GM10248 (cell line): ENCODE measurements at regions of chr9 and their contacts with region 1.

Region 1: DNA sequence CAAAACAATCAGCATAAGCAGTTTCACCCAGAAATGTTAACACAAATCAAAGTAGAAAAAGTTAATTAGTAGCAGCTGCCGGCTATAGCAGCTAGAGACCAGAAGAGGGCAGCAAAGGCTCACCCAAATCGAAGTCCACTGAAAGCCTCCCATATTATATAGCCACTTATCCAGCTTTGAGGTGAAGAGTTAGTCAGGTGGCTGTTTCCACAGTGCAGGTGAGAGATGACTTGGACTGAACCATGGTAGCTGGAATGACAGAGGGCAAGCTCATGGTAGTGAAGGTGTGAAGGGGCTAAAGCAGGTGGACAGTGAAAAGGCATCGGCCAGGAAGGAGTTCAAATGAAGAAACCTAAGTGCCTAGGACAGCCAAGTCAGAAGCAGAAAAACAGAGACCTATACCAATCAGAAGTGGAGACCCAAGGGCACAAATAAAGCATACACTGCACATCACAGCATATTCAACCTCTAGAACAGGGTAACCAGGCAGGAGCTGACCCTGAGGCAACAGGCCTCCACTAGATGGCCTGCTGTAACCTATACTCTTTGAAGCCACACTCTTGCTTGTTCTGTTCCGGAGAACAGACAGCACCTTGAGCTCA is 7.2 kb upstream of the RNF38 start:
- DNase-seq: peak; percentile 55
- CTCF ChIP-seq: peak; percentile 92

Region 2: DNA sequence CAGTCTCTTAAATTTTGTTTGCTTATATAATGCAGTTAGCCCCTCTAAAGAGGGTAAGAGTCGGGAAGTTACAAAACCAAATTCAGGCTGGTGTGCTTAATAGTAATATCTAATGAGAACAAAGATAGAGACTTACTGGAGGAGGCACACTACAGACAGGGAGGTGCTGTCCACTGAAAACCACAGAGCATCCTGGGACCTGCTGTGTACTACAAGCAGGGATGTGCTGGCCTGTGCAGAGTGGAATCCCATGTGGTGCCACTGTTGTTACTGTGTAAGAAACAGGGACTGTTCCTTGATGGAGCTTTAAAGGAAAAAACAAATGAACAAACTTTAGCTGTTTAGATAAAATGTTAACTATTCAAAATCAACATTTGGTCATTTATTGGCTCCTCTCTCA is 49.6 kb before region 1 on chr9:
- CTCF ChIA-PET with region 1: no interaction called
- POLR2A ChIA-PET with region 1: no interaction called
- DNase-seq: no peak
- CTCF ChIP-seq: no peak

Region 3: DNA sequence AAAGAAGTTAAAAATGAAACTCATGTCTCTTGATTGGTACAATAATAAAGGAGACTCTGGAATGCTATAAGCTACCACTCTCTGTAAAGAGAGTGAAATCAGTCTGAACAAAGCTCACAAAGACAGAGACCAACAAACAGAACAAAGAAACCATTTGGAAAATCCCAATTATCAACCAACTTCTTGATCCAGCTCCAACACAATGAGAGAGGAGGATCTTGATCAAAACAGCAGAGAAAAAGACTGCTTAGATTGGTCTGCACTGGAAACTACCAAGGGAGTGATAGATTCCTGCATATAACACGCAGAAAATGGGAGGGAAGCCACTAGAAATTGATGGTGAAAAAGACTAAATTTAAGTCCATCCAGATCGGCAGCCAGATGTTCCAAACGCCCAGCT is 16.0 kb after region 1 on chr9:
- CTCF ChIA-PET with region 1: interaction called, 43 read pairs
- POLR2A ChIA-PET with region 1: no interaction called
- DNase-seq: no peak
- CTCF ChIP-seq: no peak

Region 4: GRCh38 chr9:36441966-36442365 is 34.7 kb after region 1 on chr9:
- CTCF ChIA-PET with region 1: interaction called, 40 read pairs
- POLR2A ChIA-PET with region 1: no interaction called
- DNase-seq: no peak
- CTCF ChIP-seq: no peak

Region 5: DNA sequence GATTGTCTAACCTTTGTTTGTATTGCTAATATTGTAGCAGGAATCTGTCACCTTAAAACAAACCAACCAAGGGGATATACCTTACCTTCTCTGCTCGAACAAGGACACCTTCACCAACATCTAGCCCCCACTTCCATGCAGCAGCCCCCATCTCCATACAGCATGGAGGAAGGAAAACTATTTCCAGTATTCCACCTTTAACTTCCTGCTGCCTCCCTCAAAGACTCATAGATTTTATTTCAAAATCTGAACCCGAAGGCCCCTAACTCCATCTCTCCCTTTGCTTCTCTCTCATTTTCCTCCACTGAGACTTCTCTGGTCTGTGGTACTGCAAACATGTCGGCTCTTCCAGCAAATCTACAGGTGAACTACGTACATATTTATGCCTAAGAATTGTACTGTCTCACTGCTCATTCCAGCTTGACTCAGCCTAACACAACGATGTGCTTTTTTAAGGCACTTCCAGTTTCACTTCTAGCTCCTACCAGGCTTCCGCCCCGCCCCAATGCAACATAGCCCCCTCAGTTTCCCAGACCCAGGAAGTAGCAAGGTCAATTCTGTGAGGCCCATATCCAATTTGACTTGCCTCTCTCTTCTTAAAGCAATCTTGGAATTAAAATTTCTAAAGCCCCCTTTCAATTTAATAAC is 63.5 kb after region 1 on chr9:
- CTCF ChIA-PET with region 1: interaction called, 12 read pairs
- POLR2A ChIA-PET with region 1: no interaction called
- DNase-seq: peak; percentile 81
- CTCF ChIP-seq: no peak

Region 6: GRCh38 chr9:36566813-36567221 is 159.6 kb after region 1 on chr9:
- CTCF ChIA-PET with region 1: interaction called, 14 read pairs
- POLR2A ChIA-PET with region 1: no interaction called
- DNase-seq: no peak
- CTCF ChIP-seq: no peak

Region 7: DNA sequence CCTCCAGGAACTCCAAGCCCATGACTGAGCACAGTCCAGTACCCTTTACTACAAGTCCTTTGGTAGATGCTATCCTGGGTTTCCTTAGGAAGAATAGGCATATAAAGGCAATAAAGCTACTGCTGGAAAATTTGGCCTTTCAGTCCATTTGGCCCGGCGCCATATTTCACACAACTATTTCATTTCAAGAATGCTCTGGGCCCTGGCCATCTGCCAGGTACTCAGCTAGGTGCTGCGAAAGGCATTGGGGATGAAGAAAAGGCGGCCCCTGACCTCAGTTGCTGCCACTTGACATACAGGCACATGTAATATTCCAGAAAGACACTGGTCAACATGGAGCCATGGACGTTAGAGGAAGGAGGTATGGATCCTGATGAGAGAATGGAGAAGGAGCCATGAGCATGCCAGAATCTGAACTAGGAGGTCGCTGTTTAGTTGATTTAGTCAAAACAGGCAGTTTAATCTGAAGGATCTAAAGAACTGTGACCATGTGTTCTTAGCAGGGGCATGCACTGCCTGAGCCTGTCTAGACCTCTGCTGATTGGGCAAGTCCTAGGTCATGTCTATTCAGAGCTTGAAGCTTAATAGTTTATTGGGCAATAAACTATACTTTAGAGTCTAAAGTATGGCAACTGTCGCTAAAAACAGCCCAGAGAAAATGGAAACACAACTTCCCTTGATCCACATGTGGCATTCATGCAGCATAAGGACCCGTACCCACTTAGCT is 314.8 kb after region 1 on chr9:
- CTCF ChIA-PET with region 1: interaction called, 17 read pairs
- POLR2A ChIA-PET with region 1: no interaction called
- DNase-seq: no peak
- CTCF ChIP-seq: no peak